Heart left ventricle (tissue), 16 donors: ENCODE measurements at regions of chr22 and their contacts with region 1.

Region 1: GRCh38 chr22:47810505-47811500 is 1048.4 kb downstream of the TBC1D22A start:
- DNase-seq: no peak
- ATAC-seq: no peak
- H3K4me3 ChIP-seq: no peak overlapping the region
- H3K27ac ChIP-seq: no peak overlapping the region
- H3K4me1 ChIP-seq: no peaks in the 10 kb centered on the region
- H3K27me3 ChIP-seq: peaks cover 0 to 17% (median 2%) of the 10 kb centered on the region in 9 donors
- CTCF ChIP-seq: no peak
- POLR2A ChIP-seq: no peak

Region 2: GRCh38 chr22:47759909-47760308 is 50.9 kb before region 1 on chr22:
- intact Hi-C with region 1: loop called in 1 of 10 experiments (anchors 5 kb)
- DNase-seq: no peak
- ATAC-seq: no peak
- H3K4me3 ChIP-seq: no peak overlapping the region
- H3K27ac ChIP-seq: no peak overlapping the region
- H3K4me1 ChIP-seq: no peaks in the 10 kb centered on the region
- H3K27me3 ChIP-seq: peaks cover 0 to 30% (median 0%) of the 10 kb centered on the region in 9 donors
- CTCF ChIP-seq: no peak
- POLR2A ChIP-seq: no peak

Region 3: DNA sequence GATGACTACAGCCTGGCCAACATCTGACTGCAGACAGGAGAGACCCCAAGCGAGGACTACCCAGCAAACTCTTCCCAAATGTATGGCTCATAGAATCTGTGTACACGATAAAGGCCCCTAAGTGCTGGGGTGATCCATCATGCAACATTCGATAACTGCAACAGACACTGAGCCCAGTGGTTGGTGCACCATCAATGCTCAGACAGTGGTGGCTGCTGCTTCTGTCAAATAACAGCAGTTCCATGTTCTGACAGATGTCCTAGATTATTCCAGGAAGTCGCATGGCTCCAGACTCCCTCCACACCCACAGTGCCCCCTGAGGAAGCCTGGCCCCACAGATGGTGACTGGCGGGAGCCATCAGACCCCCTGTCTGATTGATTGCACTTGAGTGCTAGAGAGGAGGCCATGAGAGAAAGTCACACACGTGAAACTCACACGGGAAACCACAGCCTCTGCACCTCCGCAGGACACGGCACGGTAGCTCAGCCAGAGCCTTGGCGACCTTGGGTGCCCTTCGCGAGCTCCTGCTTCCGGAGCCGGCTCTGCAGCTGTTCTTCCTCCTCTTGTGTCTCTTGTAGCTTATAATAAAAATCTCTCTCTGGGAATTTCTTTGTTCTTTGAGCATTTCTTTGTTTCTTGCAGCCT is 107.6 kb after region 1 on chr22:
- intact Hi-C with region 1: no loop called
- DNase-seq: no peak
- ATAC-seq: no peak
- H3K4me3 ChIP-seq: no peak overlapping the region
- H3K27ac ChIP-seq: no peak overlapping the region
- H3K4me1 ChIP-seq: no peaks in the 10 kb centered on the region
- H3K27me3 ChIP-seq: peaks cover 0 to 4% (median 0%) of the 10 kb centered on the region in 9 donors
- CTCF ChIP-seq: no peak
- POLR2A ChIP-seq: no peak